ENCODE measurements at regions of chr14 and their contacts with region 1.

Region 1: DNA sequence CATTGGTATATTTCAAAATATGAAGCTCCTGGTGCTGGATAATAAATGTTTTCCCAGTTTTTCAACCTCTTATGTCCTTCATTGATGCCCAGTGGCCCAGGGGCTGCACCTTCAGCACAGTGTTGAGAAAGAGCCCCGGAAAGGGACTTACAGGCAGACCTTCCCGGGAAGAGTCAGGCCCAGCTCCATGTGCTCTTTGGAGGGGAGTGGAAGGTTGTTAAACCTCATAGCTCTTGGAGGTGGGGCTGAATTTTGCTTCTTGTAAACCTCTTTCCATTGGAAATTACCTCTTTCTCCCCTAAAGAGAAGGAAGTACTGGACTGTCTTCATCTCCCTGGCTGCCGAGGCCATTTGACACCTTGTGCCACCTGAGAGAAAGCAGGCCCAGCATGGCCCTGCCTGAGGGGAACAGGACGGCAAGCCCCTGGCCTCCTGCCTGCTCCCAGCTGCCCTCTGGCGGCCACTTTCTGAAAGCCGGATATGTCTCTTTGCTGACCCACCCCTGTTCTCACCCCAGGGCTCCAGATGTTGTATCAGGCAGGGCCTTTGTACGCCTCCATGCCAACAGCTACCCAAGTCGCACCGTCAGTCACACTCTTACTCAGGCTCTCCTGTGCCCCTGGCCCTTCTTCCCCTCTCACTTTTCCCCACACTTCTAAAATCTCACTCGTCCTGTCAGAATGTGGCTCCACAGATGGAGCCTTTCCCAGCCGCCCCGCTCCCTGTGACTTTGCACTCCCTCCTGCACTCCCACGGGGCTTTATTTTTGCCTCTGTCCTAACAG is 43.0 kb downstream of the EVL start:
- DNase-seq: peak; percentile 75 to 90 (median 84)
- H3K4me3 ChIP-seq: no peak overlapping the region
- H3K4me3 Mint-ChIP-seq: peak overlapping the region; percentile 14 to 82 (median 58)
- H3K27ac ChIP-seq: peak overlapping the region; percentile 10
- H3K27ac Mint-ChIP-seq: peak overlapping the region; percentile 86 to 97 (median 96)
- H3K4me1 ChIP-seq: peaks cover 63% of the 10 kb centered on the region
- H3K4me1 Mint-ChIP-seq: peaks cover 75 to 89% (median 77%) of the 10 kb centered on the region in 3 donors
- H3K27me3 ChIP-seq: no peaks in the 10 kb centered on the region
- H3K27me3 Mint-ChIP-seq: peaks cover 0 to 6% of the 10 kb centered on the region in 2 donors

Region 2: GRCh38 chr14:99909513-99910064 is 198.6 kb before region 1 on chr14:
- CTCF ChIA-PET with region 1: no interaction called
- POLR2A ChIA-PET with region 1: no interaction called
- DNase-seq: no peak
- H3K4me3 ChIP-seq: no peak overlapping the region
- H3K4me3 Mint-ChIP-seq: no peak overlapping the region
- H3K27ac ChIP-seq: no peak overlapping the region
- H3K27ac Mint-ChIP-seq: no peak overlapping the region
- H3K4me1 ChIP-seq: no peaks in the 10 kb centered on the region
- H3K4me1 Mint-ChIP-seq: no peaks in the 10 kb centered on the region
- H3K27me3 ChIP-seq: peaks cover 8% of the 10 kb centered on the region
- H3K27me3 Mint-ChIP-seq: peaks cover 6 to 31% of the 10 kb centered on the region in 2 donors

Region 3: DNA sequence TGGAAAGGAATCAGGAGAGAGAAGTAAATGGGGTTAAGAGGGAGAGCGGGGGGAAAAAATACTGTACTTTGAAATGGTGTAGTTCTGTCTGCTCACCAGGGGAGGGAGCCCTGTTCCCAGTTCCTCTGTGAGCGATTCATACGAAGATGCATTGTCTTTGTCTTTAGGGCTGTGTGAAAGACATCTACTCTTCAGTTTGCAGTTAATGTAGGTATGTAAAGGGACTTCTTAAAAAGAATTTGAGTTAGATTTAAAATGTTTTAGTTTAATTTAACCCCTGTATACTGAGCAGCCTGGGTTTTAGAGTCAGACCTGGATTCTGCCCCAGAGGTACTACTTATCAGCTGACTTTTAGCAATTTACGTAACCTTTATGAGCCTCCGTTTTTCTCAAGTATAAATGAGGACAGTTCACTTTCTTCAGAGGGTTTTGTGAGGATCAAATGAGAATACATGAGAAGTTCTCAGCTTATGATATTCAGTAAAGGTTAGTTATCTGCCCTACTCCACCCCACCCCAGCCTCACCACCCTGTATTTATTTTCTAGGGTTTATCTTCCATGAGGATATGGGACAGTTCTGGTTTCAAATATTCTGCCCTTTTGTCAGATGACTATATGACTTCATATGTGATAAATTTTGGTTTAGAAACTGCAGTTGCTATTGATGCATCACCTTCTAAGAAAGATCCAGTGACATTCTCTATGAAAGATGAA is 125.5 kb before region 1 on chr14:
- CTCF ChIA-PET with region 1: interaction called, 10 read pairs
- POLR2A ChIA-PET with region 1: no interaction called
- DNase-seq: peak; percentile 45 to 76 (median 62)
- H3K4me3 ChIP-seq: no peak overlapping the region
- H3K4me3 Mint-ChIP-seq: no peak overlapping the region
- H3K27ac ChIP-seq: no peak overlapping the region
- H3K27ac Mint-ChIP-seq: no peak overlapping the region
- H3K4me1 ChIP-seq: peaks cover 12% of the 10 kb centered on the region
- H3K4me1 Mint-ChIP-seq: peaks cover 4 to 10% (median 5%) of the 10 kb centered on the region in 3 donors
- H3K27me3 ChIP-seq: no peaks in the 10 kb centered on the region
- H3K27me3 Mint-ChIP-seq: no peaks in the 10 kb centered on the region

Region 4: GRCh38 chr14:100067971-100068959 is 40.0 kb before region 1 on chr14:
- CTCF ChIA-PET with region 1: interaction called, 1,568 read pairs
- POLR2A ChIA-PET with region 1: interaction called, 106 read pairs
- DNase-seq: peak; percentile 83 to 97 (median 93)
- H3K4me3 ChIP-seq: peak overlapping the region; percentile 87
- H3K4me3 Mint-ChIP-seq: peak overlapping the region; percentile 84 to 100 (median 99)
- H3K27ac ChIP-seq: peak overlapping the region; percentile 84
- H3K27ac Mint-ChIP-seq: peak overlapping the region; percentile 90 to 100 (median 99)
- H3K4me1 ChIP-seq: peaks cover 69% of the 10 kb centered on the region
- H3K4me1 Mint-ChIP-seq: peaks cover 75 to 83% (median 80%) of the 10 kb centered on the region in 3 donors
- H3K27me3 ChIP-seq: no peaks in the 10 kb centered on the region
- H3K27me3 Mint-ChIP-seq: peaks cover 0 to 2% of the 10 kb centered on the region in 2 donors

Region 5: GRCh38 chr14:100078991-100079725 is 29.1 kb before region 1 on chr14:
- CTCF ChIA-PET with region 1: interaction called, 1,568 read pairs
- POLR2A ChIA-PET with region 1: interaction called, 21 read pairs
- DNase-seq: peak; percentile 81 to 93 (median 89)
- H3K4me3 ChIP-seq: peak overlapping the region; percentile 44
- H3K4me3 Mint-ChIP-seq: peak overlapping the region; percentile 70 to 88 (median 80)
- H3K27ac ChIP-seq: peak overlapping the region; percentile 58
- H3K27ac Mint-ChIP-seq: peak overlapping the region; percentile 85 to 98 (median 94)
- H3K4me1 ChIP-seq: peaks cover 96% of the 10 kb centered on the region
- H3K4me1 Mint-ChIP-seq: peaks cover 96 to 100% (median 99%) of the 10 kb centered on the region in 3 donors
- H3K27me3 ChIP-seq: no peaks in the 10 kb centered on the region
- H3K27me3 Mint-ChIP-seq: no peaks in the 10 kb centered on the region

Region 6: DNA sequence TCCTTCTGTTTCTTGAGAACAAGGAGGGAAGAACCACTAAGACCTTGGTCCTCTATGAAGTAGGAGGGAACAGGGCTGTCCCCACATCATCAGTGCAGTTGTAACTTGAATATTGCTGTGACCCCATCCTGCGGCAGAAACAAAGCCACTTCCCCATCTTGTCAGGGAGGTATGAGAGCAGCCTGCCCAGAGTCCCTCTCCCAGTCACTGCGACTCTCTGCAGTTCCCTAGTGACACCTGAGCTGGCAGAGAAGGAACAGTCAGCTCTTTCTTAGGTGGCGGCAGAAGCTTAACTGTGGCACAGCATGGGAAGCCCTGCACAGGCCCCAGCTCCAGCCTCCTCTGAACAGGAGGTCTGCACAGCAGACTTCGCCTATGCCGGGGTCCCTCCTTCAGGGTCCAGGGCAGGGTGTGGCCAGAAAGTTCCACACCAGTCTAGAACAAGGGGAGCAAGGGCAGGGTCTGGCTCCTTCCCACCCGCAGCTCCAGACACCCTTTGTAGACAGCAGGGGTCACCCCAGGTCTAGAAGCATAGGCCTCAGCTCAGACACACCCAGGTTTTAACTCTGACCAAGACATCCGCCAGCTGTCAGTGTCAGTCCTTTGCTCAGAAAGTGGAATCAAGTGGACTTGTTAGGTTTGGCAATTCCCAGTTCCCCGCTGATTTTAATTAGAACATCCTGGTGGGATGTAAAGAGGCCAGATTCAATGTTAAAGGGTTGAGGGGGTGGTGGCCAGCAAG is 14.4 kb after region 1 on chr14:
- CTCF ChIA-PET with region 1: interaction called, 12 read pairs
- POLR2A ChIA-PET with region 1: interaction called, 3 read pairs
- DNase-seq: no peak
- H3K4me3 ChIP-seq: no peak overlapping the region
- H3K4me3 Mint-ChIP-seq: no peak overlapping the region
- H3K27ac ChIP-seq: no peak overlapping the region
- H3K27ac Mint-ChIP-seq: peak overlapping the region in 3 of 8 donors; percentile 51 to 80 (median 77)
- H3K4me1 ChIP-seq: no peaks in the 10 kb centered on the region
- H3K4me1 Mint-ChIP-seq: peaks cover 8 to 31% (median 10%) of the 10 kb centered on the region in 3 donors
- H3K27me3 ChIP-seq: no peaks in the 10 kb centered on the region
- H3K27me3 Mint-ChIP-seq: no peaks in the 10 kb centered on the region

Measured in CD8-positive, alpha-beta memory T cell (primary cell).